Activated CD4-positive, alpha-beta memory T cell treated with anti-CD3 and anti-CD28 coated beads for 36 hours (primary cell): ENCODE measurements at regions of chr12 and their contacts with region 1.

Region 1: DNA sequence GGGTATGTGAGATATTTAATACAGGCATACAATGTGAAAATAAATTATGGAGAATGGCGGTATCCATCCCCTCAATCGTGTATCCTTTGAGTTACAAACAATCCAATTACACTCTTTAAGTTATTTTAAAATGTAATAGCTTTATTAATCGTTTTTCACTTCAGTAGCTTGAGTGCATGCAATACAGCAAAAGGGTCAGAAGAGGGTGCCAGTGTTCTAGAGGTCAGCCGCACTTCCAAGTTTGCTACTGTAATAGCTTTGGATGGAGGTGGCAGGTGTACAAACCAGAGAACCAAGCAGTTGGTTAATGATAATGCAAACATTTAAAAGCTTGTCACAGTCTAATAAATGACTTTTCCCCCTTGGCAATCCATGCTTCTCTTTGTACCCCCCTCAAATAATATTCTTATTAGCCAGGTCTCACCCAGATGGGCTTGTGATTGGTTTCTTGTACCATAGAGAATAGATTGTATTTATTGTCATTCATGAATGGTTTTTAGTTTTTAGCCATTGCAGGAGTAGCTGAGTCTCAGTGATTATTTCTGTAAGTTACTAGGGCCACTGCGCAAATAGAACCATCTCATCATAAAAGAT is 127.0 kb downstream of the ERC1 start:
- DNase-seq: peak; percentile 78
- H3K4me3 Mint-ChIP-seq: no peak overlapping the region
- H3K27ac Mint-ChIP-seq: no peak overlapping the region
- H3K4me1 Mint-ChIP-seq: peaks cover 17% of the 10 kb centered on the region
- H3K27me3 Mint-ChIP-seq: no peaks in the 10 kb centered on the region

Region 2: DNA sequence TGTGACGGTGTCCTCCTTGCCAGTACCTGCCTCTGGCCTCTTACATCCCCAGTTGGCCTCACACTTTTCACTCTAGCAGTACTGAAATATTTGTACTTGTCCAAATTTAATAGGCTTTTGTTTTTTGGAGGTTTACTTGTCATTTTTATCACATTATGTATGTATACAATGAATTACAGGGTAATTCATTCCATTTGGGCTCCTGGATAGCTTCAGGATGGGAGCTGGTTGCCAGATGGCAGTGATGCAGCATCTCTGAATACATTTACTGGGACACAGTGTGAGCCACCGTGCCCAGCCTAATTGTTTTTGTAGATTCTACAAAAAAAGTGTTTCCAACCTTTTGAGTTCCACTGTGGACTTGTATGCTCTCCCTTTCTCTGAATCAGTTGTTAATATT is 703.2 kb before region 1 on chr12:
- CTCF ChIA-PET with region 1: no interaction called
- POLR2A ChIA-PET with region 1: no interaction called
- intact Hi-C with region 1: no loop called
- DNase-seq: no peak
- H3K4me3 Mint-ChIP-seq: no peak overlapping the region
- H3K27ac Mint-ChIP-seq: no peak overlapping the region
- H3K4me1 Mint-ChIP-seq: no peaks in the 10 kb centered on the region
- H3K27me3 Mint-ChIP-seq: no peaks in the 10 kb centered on the region

Region 3: GRCh38 chr12:1046727-1047126 is 71.3 kb before region 1 on chr12:
- CTCF ChIA-PET with region 1: no interaction called
- POLR2A ChIA-PET with region 1: no interaction called
- intact Hi-C with region 1: no loop called
- DNase-seq: no peak
- H3K4me3 Mint-ChIP-seq: no peak overlapping the region
- H3K27ac Mint-ChIP-seq: no peak overlapping the region
- H3K4me1 Mint-ChIP-seq: peaks cover 4% of the 10 kb centered on the region
- H3K27me3 Mint-ChIP-seq: no peaks in the 10 kb centered on the region

Region 4: DNA sequence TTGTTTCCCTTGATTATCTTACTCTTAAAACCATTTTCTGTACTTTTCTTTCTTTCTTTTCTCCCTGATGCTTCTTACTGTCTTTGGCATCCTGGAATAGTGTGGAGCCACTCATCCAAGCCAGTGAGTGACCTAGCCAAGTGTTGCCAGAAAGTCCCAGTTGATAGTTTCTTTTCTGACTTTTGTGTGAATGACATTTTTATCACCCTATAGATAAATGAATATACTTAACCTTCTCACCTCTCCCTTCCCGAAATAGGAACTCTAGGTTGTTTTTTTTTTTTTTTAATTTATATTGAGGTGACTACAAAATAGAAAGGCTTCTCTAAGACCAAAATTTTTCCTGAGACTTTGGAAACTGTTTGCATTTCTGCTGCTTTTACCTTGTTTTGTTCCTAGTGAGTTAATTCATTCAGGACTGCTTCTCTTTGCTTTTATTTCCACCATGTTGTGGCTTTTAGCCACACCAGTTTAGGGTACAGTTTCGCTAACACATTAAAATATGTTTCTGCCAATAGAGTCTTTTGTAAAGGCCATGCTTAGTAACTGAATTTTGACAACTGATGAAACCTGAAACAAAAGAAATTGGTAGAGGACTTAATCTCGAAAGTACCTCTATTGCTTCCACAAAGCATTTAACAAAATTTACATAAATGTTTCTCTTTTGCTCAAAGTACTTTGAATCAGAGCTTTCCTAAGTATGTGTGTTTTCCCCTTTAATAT is 67.6 kb after region 1 on chr12:
- CTCF ChIA-PET with region 1: interaction called, 13 read pairs
- POLR2A ChIA-PET with region 1: no interaction called
- intact Hi-C with region 1: no loop called
- DNase-seq: no peak
- H3K4me3 Mint-ChIP-seq: no peak overlapping the region
- H3K27ac Mint-ChIP-seq: peak overlapping the region; percentile 15
- H3K4me1 Mint-ChIP-seq: peaks cover 10% of the 10 kb centered on the region
- H3K27me3 Mint-ChIP-seq: no peaks in the 10 kb centered on the region

Region 5: GRCh38 chr12:1474041-1474573 is 356.0 kb after region 1 on chr12:
- CTCF ChIA-PET with region 1: interaction called, 10 read pairs
- POLR2A ChIA-PET with region 1: no interaction called
- intact Hi-C with region 1: no loop called
- DNase-seq: peak; percentile 47
- H3K4me3 Mint-ChIP-seq: no peak overlapping the region
- H3K27ac Mint-ChIP-seq: no peak overlapping the region
- H3K4me1 Mint-ChIP-seq: peaks cover 2% of the 10 kb centered on the region
- H3K27me3 Mint-ChIP-seq: no peaks in the 10 kb centered on the region

Region 6: DNA sequence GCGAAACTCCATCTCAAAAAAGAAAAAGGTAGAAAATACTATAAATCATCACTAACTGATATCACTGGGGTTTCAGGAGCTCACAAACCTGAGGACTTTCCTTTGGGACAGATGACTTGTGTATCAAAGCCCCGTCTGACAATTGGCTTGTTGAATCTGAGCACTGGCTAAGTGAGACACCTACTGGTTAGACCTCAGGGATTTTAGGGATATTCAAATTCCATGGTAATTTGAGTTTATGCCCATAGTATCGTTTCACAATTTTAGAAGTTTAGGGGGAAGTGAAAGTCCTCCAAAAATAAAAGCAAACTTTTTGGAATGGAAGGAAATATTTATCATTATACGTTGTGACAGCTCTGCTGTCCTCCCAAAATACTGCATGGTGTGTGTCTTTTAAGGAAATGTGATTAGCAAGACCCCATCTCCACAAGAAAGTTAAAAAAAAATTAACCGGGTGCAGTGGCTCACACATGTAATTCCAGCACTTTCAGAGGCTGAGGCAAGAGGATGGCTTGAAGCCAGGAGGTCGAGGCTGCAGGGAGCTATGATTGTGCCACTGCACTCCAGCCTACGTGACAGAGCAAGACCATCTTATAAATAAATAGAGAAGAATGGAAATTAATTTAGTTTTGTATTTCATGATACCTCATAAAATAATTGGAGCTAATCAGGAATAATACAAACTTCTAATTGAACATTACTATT is 427.1 kb after region 1 on chr12:
- CTCF ChIA-PET with region 1: interaction called, 17 read pairs
- POLR2A ChIA-PET with region 1: no interaction called
- intact Hi-C with region 1: no loop called
- DNase-seq: no peak
- H3K4me3 Mint-ChIP-seq: no peak overlapping the region
- H3K27ac Mint-ChIP-seq: no peak overlapping the region
- H3K4me1 Mint-ChIP-seq: no peaks in the 10 kb centered on the region
- H3K27me3 Mint-ChIP-seq: peaks cover 38% of the 10 kb centered on the region

Region 7: DNA sequence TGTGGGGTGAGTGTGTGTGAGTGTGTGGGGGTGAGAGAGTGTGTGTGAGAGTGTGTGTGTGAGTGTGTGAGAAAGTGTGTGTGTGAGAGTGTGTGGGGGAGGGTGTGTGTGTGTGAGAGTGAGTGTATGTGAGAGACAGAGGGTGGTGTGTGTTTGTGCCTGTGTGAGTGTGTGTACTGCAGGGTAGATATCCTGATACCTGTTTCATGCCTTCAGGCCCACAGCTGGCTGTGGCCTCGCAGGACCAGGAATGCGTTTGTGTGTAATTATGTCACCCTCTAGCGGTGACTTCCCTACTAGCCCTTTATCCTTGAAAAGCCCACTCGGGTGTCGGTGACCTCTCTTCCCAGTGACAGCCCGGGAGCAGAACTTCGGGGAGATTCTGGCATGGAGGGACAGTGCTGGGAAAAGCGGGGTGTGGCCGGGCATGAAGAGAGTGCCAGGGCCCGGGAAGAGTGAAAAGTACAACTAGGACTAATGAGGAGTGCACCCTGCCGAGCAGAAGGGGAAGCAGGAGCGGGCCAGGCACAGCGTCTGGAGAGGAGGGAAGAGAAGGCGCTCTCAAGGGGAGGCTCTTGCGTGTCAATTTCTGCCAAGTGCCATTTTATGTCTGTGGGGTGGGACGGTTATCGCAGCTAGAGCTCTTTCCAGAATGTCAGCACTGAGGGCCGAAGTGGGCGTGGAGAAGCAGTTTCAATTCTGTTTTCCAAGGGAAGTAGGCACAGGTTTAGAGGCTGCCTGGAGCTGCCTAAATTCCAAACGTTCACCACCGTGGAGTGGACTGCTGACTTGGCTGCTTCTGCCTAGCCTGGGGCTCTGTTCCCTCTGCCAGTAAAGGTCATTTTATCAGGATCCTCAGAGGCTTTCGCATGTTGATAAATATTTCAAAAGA is 487.3 kb after region 1 on chr12:
- CTCF ChIA-PET with region 1: interaction called, 29 read pairs
- POLR2A ChIA-PET with region 1: no interaction called
- intact Hi-C with region 1: no loop called
- DNase-seq: peak; percentile 67
- H3K4me3 Mint-ChIP-seq: peak overlapping the region; percentile 74
- H3K27ac Mint-ChIP-seq: peak overlapping the region; percentile 25
- H3K4me1 Mint-ChIP-seq: peaks cover 30% of the 10 kb centered on the region
- H3K27me3 Mint-ChIP-seq: no peaks in the 10 kb centered on the region